ENCODE measurements at regions of chr20 and their contacts with region 1.

Region 1: GRCh38 chr20:38418509-38419204 is 16.5 kb downstream of the SNHG17 start:
- ATAC-seq: peak in 4 of 8 experiments; percentile 10 to 44 (median 22)
- H3K4me3 ChIP-seq: no peak overlapping the region
- H3K27ac ChIP-seq: no peak overlapping the region
- H3K4me1 ChIP-seq: no peaks in the 10 kb centered on the region

Region 2: DNA sequence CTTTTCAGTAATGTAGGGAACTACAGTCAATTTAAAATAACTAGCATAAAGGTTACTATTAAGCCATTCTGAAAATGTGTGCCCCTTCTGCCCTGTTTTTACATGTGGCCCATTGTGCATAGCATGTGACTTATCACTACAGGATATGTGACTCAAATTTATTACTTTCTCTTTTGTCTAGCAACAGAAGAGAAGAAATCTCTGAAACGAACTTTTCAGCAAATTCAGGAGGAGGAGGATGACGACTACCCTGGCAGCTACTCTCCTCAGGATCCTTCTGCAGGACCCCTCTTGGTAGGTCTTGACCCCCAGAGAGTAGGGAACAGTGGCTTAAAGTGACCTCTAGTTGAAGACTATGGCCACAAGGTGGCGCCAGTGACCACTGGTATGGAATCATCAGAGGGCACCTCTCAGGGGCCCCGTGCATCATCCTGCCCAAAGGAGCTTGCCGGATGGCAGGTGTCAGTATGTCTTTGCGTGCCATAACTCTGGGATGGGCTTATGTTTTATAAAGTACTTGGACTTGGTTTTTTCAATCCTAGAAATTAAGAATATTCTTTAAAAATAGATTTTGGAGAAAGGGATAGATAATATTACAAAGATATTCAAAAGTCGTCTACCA is 361.2 kb before region 1 on chr20:
- in situ Hi-C with region 1: loop called in 1 of 9 experiments (anchors 25 kb)
- ATAC-seq: peak; percentile 92 to 98 (median 96)
- H3K4me3 ChIP-seq: no peak overlapping the region
- H3K27ac ChIP-seq: no peak overlapping the region
- H3K4me1 ChIP-seq: peaks cover 0 to 3% of the 10 kb centered on the region in 2 donors

Region 3: GRCh38 chr20:38229376-38230252 is 189.0 kb before region 1 on chr20:
- in situ Hi-C with region 1: loop called in 1 of 9 experiments (anchors 25 kb)
- ATAC-seq: peak in 1 of 8 experiments; percentile 63
- H3K4me3 ChIP-seq: no peak overlapping the region
- H3K27ac ChIP-seq: no peak overlapping the region
- H3K4me1 ChIP-seq: no peaks in the 10 kb centered on the region